T-cell (primary cell): ENCODE measurements at regions of chr17 and their contacts with region 1.

Region 1: DNA sequence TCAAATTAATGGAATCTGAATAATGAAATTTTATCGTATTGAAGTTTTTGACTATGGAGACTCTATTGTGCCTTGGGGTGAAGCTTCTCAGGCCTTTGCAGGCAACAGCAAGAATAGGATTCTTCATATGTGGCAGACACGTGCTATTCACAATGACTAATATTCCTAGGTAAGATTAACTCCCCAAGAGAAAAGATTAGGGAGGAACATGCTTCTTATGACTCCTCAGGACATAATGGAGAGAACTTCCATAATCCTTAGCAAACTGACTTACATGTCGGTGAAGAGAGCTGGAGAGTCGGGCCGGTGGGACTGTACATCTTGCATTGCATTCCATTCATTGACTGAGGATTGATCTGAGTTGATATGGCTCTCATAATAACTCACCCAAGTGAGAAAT is 48.9 kb upstream of the CORO6 start:
- DNase-seq: no peak
- ATAC-seq: no peak
- H3K4me3 ChIP-seq: no peak overlapping the region
- H3K4me3 Mint-ChIP-seq: no peak overlapping the region
- H3K27ac ChIP-seq: no peak overlapping the region
- H3K27ac Mint-ChIP-seq: peak overlapping the region in 1 of 2 donors; percentile 16
- H3K4me1 ChIP-seq: peaks cover 0 to 19% of the 10 kb centered on the region in 2 experiments
- H3K4me1 Mint-ChIP-seq: peaks cover 25 to 26% (median 26%) of the 10 kb centered on the region in 3 donors
- H3K27me3 ChIP-seq: no peaks in the 10 kb centered on the region
- H3K27me3 Mint-ChIP-seq: no peaks in the 10 kb centered on the region

Region 2: GRCh38 chr17:29140051-29140621 is 531.5 kb before region 1 on chr17:
- CTCF ChIA-PET with region 1: no interaction called
- POLR2A ChIA-PET with region 1: interaction called in 1 of 2 experiments, 10 read pairs
- DNase-seq: peak; percentile 44 to 81 (median 62)
- ATAC-seq: peak; percentile 64 to 78 (median 76)
- H3K4me3 ChIP-seq: peak overlapping the region; percentile 66 to 81
- H3K4me3 Mint-ChIP-seq: peak overlapping the region; percentile 88 to 89 (median 88)
- H3K27ac ChIP-seq: peak overlapping the region; percentile 77
- H3K27ac Mint-ChIP-seq: peak overlapping the region; percentile 97 to 98
- H3K4me1 ChIP-seq: peaks cover 30 to 74% of the 10 kb centered on the region in 2 experiments
- H3K4me1 Mint-ChIP-seq: peaks cover 65 to 75% (median 73%) of the 10 kb centered on the region in 3 donors
- H3K27me3 ChIP-seq: no peaks in the 10 kb centered on the region
- H3K27me3 Mint-ChIP-seq: no peaks in the 10 kb centered on the region

Region 3: DNA sequence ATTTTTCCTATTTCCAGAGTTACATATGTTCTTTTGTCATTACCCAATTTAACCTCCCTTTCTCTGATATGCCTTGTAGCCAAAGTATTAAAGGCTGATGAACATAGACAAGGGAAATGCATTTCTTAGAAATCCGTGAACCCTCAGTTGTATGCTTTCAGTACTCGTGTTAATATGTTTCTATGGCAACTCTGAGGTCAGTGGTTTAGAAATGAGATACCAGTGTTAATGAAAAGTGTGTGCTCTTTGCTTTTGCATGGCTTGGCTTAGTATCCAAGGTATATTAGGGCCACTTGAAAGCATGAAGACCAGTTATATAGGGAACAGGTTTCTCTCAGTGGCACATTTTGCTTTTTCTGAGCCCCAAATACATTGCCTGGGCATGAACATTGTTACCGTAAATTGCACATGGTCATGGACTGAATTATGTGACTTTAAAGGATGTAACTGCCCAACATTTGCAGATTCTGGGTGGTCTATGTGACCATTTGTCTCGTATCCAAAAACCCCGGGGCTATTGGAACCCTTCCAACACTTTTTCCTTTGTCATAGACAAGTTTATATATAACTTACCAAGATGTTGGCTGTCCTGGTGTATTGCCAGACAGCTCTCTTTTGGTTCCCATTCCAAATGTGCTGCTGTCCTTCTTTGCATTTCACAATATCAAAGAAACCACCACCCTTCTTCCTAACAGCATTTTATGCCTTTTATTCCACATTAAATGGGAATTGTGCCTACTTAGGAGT is 122.3 kb before region 1 on chr17:
- CTCF ChIA-PET with region 1: no interaction called
- POLR2A ChIA-PET with region 1: no interaction called
- DNase-seq: no peak
- ATAC-seq: no peak
- H3K4me3 ChIP-seq: no peak overlapping the region
- H3K4me3 Mint-ChIP-seq: no peak overlapping the region
- H3K27ac ChIP-seq: no peak overlapping the region
- H3K27ac Mint-ChIP-seq: no peak overlapping the region
- H3K4me1 ChIP-seq: no peaks in the 10 kb centered on the region
- H3K4me1 Mint-ChIP-seq: peaks cover 0 to 16% (median 8%) of the 10 kb centered on the region in 3 donors
- H3K27me3 ChIP-seq: no peaks in the 10 kb centered on the region
- H3K27me3 Mint-ChIP-seq: no peaks in the 10 kb centered on the region

Region 4: GRCh38 chr17:29694918-29695563 is 23.4 kb after region 1 on chr17:
- CTCF ChIA-PET with region 1: no interaction called
- POLR2A ChIA-PET with region 1: no interaction called
- DNase-seq: no peak
- ATAC-seq: no peak
- H3K4me3 ChIP-seq: no peak overlapping the region
- H3K4me3 Mint-ChIP-seq: no peak overlapping the region
- H3K27ac ChIP-seq: no peak overlapping the region
- H3K27ac Mint-ChIP-seq: peak overlapping the region; percentile 29 to 71
- H3K4me1 ChIP-seq: peaks cover 2 to 4% of the 10 kb centered on the region in 2 experiments
- H3K4me1 Mint-ChIP-seq: peaks cover 39 to 50% (median 46%) of the 10 kb centered on the region in 3 donors
- H3K27me3 ChIP-seq: no peaks in the 10 kb centered on the region
- H3K27me3 Mint-ChIP-seq: no peaks in the 10 kb centered on the region

Region 5: GRCh38 chr17:29718446-29719039 is 46.9 kb after region 1 on chr17:
- CTCF ChIA-PET with region 1: no interaction called
- POLR2A ChIA-PET with region 1: no interaction called
- DNase-seq: no peak
- ATAC-seq: no peak
- H3K4me3 ChIP-seq: no peak overlapping the region
- H3K4me3 Mint-ChIP-seq: no peak overlapping the region
- H3K27ac ChIP-seq: no peak overlapping the region
- H3K27ac Mint-ChIP-seq: no peak overlapping the region
- H3K4me1 ChIP-seq: peaks cover 36 to 43% of the 10 kb centered on the region in 2 experiments
- H3K4me1 Mint-ChIP-seq: peaks cover 86 to 92% (median 91%) of the 10 kb centered on the region in 3 donors
- H3K27me3 ChIP-seq: no peaks in the 10 kb centered on the region
- H3K27me3 Mint-ChIP-seq: no peaks in the 10 kb centered on the region

Region 6: DNA sequence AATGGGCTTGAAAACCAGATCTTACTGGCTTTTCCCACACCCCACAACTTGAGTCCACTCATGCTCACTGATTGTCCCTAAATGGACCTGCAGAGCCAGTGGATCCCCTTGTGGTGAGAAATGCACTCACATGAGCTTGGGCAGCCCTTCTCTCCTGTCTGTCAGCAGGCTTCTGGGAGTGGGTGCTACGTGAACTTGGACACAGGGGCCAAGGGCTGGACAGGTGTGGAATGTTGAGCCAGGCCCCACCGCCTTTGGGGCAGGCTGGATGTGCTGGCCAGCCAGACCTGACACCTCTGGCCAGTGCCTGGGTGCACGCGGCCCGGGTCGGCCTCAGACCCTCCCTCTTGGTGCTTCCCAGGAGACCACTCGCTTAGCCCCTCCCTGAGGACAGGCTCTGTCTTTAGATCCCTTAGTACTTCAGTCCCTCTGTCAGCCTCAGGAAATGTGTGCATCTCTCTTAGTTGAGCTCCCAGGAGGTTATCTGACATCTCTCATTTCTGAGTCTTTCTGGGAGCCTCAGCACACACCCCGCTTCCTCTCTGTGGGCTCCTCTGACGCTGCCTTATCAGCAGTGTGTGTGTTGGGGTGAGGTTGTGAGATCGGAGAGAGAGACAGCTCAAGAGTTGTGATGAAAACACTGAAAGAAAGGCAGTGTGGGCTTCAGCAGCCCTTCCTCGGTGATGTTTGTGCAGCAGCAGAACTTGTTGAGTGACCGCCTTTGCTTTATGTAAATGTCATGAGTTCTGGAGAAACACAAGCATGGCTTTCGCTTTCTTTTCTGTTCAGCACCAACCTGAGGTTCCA is 1836.8 kb after region 1 on chr17:
- CTCF ChIA-PET with region 1: no interaction called
- POLR2A ChIA-PET with region 1: no interaction called
- DNase-seq: peak; percentile 52 to 90 (median 76)
- ATAC-seq: peak; percentile 90 to 93 (median 91)
- H3K4me3 ChIP-seq: peak overlapping the region; percentile 44 to 64
- H3K4me3 Mint-ChIP-seq: peak overlapping the region; percentile 83 to 90 (median 84)
- H3K27ac ChIP-seq: peak overlapping the region; percentile 83
- H3K27ac Mint-ChIP-seq: peak overlapping the region; percentile 100
- H3K4me1 ChIP-seq: peaks cover 35 to 68% of the 10 kb centered on the region in 2 experiments
- H3K4me1 Mint-ChIP-seq: peaks cover 71 to 74% (median 73%) of the 10 kb centered on the region in 3 donors
- H3K27me3 ChIP-seq: no peaks in the 10 kb centered on the region
- H3K27me3 Mint-ChIP-seq: no peaks in the 10 kb centered on the region